Panc1 (cell line): ENCODE measurements at regions of chr11 and their contacts with region 1.

Region 1: DNA sequence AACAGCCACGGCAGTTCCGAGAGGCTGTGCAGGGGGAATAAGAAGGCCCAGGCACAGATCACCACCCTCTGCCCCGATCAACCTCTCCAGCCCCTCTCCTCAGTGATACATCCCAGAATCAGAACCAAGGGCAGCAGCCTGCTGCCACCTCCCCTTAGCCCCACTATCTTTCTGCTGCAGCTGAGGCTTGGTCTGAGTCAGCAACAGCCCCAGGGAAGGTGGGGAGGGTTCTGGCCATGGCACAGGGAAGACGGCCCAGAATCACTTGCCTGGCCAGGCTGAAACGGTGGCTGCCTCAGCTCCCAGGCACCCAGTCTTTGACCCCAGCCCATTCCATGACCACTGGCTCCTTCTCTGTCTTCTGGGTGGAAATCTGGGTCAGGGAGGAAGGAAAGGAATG is 2.3 kb downstream of the CHID1 start:
- DNase-seq: no peak
- ATAC-seq: no peak
- H3K4me3 ChIP-seq: no peak overlapping the region; a peak in 1 of 4 replicates
- H3K27ac ChIP-seq: no peak overlapping the region
- H3K4me1 ChIP-seq: peaks cover 17% of the 10 kb centered on the region
- H3K27me3 ChIP-seq: no peaks in the 10 kb centered on the region
- CTCF ChIP-seq: no peak

Region 2: GRCh38 chr11:995752-996420 is 87.6 kb after region 1 on chr11:
- CTCF ChIA-PET with region 1: no interaction called
- POLR2A ChIA-PET with region 1: no interaction called
- in situ Hi-C with region 1: loop called (anchors 5 kb)
- intact Hi-C with region 1: no loop called
- DNase-seq: no peak
- ATAC-seq: no peak
- H3K4me3 ChIP-seq: no peak overlapping the region
- H3K27ac ChIP-seq: no peak overlapping the region
- H3K4me1 ChIP-seq: 0 out of 2 replicates have a peak, but pooled peaks cover 4% of the 10 kb centered on the region
- H3K27me3 ChIP-seq: no peaks in the 10 kb centered on the region
- CTCF ChIP-seq: no peak